ENCODE measurements at regions of chr18 and their contacts with region 1.

Region 1: GRCh38 chr18:9575558-9575957 is 38.8 kb downstream of the PPP4R1 start:
- DNase-seq: peak; percentile 70 to 98 (median 76)
- ATAC-seq: peak; percentile 98
- H3K4me3 ChIP-seq: no peak overlapping the region
- H3K27ac ChIP-seq: peak overlapping the region; percentile 16; the same call in 1 of the 3 replicates
- H3K4me1 ChIP-seq: peaks cover 0 to 6% of the 10 kb centered on the region in 2 experiments; a peak in 2 of 5 replicates
- H3K27me3 ChIP-seq: no peaks in the 10 kb centered on the region
- CTCF ChIP-seq: peak; percentile 87 to 99 (median 96)
- EP300 ChIP-seq: peak; percentile 48; the same call in 1 of the 2 replicates
- POLR2A ChIP-seq: no peak
- RAD21 ChIP-seq: peak; percentile 94 to 99

Region 2: GRCh38 chr18:9608298-9608697 is 32.7 kb after region 1 on chr18:
- CTCF ChIA-PET with region 1: no interaction called
- POLR2A ChIA-PET with region 1: interaction called, 4 read pairs
- in situ Hi-C with region 1: no loop called
- intact Hi-C with region 1: loop called (anchors 2 kb)
- DNase-seq: peak; percentile 59 to 82 (median 66)
- ATAC-seq: peak; percentile 60
- H3K4me3 ChIP-seq: peak overlapping the region; percentile 4; the same call in 1 of the 2 replicates
- H3K27ac ChIP-seq: peak overlapping the region; percentile 74
- H3K4me1 ChIP-seq: peaks cover 3 to 41% of the 10 kb centered on the region in 2 experiments
- H3K27me3 ChIP-seq: no peaks in the 10 kb centered on the region
- CTCF ChIP-seq: no peak
- EP300 ChIP-seq: peak; percentile 88
- POLR2A ChIP-seq: no peak
- RAD21 ChIP-seq: no peak

Region 3: DNA sequence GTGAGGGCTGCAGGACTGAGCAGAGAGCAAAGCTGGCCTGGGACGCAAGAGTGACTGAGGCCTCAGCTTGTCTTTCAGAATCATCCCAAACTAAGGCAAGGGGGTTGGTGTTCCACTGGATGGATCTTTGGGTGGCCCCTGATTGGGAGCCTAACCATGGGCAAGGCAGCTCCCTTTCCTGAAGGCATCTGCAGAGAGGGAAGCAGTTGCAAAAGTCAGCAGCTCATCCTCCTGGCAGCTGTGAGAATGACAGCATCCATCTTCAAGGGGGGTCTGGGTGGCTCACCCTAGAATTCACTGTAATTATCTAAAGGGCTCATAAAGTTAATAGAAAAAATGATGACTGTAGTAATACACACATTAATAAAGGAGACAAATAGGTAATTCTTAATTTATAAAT is 86.0 kb after region 1 on chr18:
- CTCF ChIA-PET with region 1: interaction called, 4 read pairs
- POLR2A ChIA-PET with region 1: interaction called, 3 read pairs
- in situ Hi-C with region 1: no loop called
- intact Hi-C with region 1: loop called (anchors 2 kb)
- DNase-seq: peak in 2 of 4 experiments; percentile 31 to 41
- ATAC-seq: peak; percentile 66
- H3K4me3 ChIP-seq: no peak overlapping the region
- H3K27ac ChIP-seq: no peak overlapping the region
- H3K4me1 ChIP-seq: peaks cover 4 to 8% of the 10 kb centered on the region in 2 experiments; a peak in 3 of 5 replicates
- H3K27me3 ChIP-seq: no peaks in the 10 kb centered on the region
- CTCF ChIP-seq: peak; percentile 55 to 63 (median 58)
- EP300 ChIP-seq: no peak
- POLR2A ChIP-seq: no peak
- RAD21 ChIP-seq: peak; percentile 20 to 73; a peak in 2 of 4 replicates

Region 4: GRCh38 chr18:9673296-9674251 is 98.0 kb after region 1 on chr18:
- CTCF ChIA-PET with region 1: interaction called, 6 read pairs
- POLR2A ChIA-PET with region 1: no interaction called
- in situ Hi-C with region 1: no loop called
- intact Hi-C with region 1: loop called (anchors 1 kb)
- DNase-seq: peak in 2 of 4 experiments; percentile 55 to 73
- ATAC-seq: peak; percentile 91
- H3K4me3 ChIP-seq: no peak overlapping the region
- H3K27ac ChIP-seq: peak overlapping the region; percentile 43; the same call in 1 of the 3 replicates
- H3K4me1 ChIP-seq: peaks cover 0 to 8% of the 10 kb centered on the region in 2 experiments; a peak in 2 of 5 replicates
- H3K27me3 ChIP-seq: no peaks in the 10 kb centered on the region
- CTCF ChIP-seq: peak; percentile 54 to 76 (median 63)
- EP300 ChIP-seq: no peak
- POLR2A ChIP-seq: no peak
- RAD21 ChIP-seq: peak; percentile 70 to 84

Region 5: DNA sequence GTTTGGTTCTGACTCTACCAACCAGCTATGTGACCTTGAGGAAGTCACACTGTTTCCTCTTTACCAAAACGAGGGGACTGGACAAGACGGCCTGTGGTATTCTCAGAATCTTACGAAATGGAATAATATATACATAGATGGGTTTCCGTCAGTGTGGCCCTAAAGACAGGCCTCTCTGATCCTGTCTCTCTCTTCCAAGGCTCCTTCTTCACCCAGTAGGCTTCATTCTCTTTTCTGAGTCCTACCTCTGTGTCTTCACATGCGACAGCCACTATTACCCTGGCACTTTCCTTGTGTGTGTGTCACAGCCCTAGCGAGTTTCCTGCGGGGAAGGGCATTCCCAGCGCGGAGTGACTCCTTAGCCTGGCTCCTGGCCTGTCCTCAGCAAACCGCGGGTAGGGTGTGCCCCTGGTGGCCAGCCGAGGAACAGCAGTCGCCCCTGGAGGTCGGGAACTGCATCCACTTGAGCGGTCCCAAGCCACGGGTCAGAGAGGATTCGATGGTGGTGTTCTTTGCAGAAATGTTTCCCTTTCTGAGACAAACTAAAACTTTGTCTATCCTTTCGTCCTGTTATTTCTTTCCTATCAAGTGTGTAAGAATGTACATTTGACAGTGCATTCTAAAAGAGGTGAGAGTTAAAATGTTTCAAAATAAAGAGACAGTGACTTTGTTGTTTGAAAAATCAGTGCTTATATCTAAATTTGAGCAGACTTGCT is 195.9 kb after region 1 on chr18:
- CTCF ChIA-PET with region 1: interaction called, 3 read pairs
- POLR2A ChIA-PET with region 1: interaction called, 3 read pairs
- in situ Hi-C with region 1: loop called (anchors 10 kb)
- intact Hi-C with region 1: loop called (anchors 1 kb)
- DNase-seq: peak; percentile 81 to 91 (median 88)
- ATAC-seq: peak; percentile 99
- H3K4me3 ChIP-seq: no peak overlapping the region
- H3K27ac ChIP-seq: peak overlapping the region; percentile 23; the same call in 1 of the 3 replicates
- H3K4me1 ChIP-seq: peaks cover 11 to 21% of the 10 kb centered on the region in 2 experiments
- H3K27me3 ChIP-seq: no peaks in the 10 kb centered on the region
- CTCF ChIP-seq: peak; percentile 97 to 100 (median 98)
- EP300 ChIP-seq: no peak
- POLR2A ChIP-seq: no peak
- RAD21 ChIP-seq: peak; percentile 90 to 98